Heart right ventricle (tissue), 16 donors: ENCODE measurements at regions of chr17 and their contacts with region 1.

Region 1: DNA sequence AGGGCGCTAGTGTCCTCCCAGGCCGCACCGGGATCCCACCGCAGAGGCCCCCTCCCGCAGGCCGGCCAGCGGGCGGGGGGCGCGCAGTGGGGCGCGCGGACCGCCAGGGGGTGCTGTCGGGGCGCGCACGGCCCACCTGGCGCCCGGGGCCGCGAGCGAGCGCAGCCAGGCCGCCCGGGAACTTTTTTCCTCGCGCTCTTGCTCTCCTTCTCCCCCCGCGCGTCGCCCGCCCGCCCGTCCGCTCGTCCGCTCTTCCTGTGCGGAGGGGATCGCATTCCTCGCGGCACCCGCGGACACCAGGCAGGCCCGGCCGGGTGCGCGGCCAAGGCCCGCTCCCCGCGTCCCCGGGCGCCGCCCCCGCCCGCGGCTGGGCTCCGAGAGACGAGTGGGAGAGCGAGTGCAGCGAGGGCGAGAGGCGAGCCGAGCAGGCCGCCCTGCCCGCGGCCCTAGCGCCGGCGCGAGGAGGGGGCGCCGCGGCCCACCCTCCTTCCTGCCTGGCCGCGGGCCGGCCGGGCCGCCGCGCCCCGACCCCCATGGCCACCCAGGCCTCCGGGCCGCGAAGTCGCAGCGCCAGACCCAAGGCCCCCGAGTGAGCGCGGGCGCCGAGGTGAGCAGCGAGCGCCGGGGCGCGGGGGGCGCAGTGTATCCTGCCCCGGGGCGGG is at the start of gene RAI1:
- DNase-seq: peak; percentile 78 to 81
- ATAC-seq: peak; percentile 36 to 75 (median 68)
- H3K4me3 ChIP-seq: peak within 1 kb of the TSS; percentile 56 to 90 (median 72)
- H3K27ac ChIP-seq: peak within 1 kb of the TSS; percentile 83 to 98 (median 94)
- H3K4me1 ChIP-seq: peaks cover 22 to 47% (median 44%) of the 10 kb centered on the region in 9 donors
- H3K27me3 ChIP-seq: no peaks in the 10 kb centered on the region
- CTCF ChIP-seq: peak; percentile 55 to 99 (median 71)
- total RNA-seq, gene RAI1: 15.8 to 32.0 (median 20.9) TPM

Region 2: GRCh38 chr17:17496189-17497064 is 184.9 kb before region 1 on chr17 and contains the start of gene RASD1:
- intact Hi-C with region 1: no loop called
- DNase-seq: peak; percentile 89 to 94
- ATAC-seq: peak; percentile 88 to 95 (median 92)
- H3K4me3 ChIP-seq: peak within 1 kb of the TSS; percentile 38 to 75 (median 66)
- H3K27ac ChIP-seq: peak within 1 kb of the TSS; percentile 83 to 97 (median 90)
- H3K4me1 ChIP-seq: peaks cover 9 to 54% (median 41%) of the 10 kb centered on the region in 9 donors
- H3K27me3 ChIP-seq: peaks cover 0 to 22% (median 0%) of the 10 kb centered on the region in 7 donors
- CTCF ChIP-seq: peak; percentile 93 to 100 (median 98)
- total RNA-seq, gene RASD1: 2.2 to 67.7 (median 6.8) TPM

Region 3: GRCh38 chr17:17653343-17653742 is 28.0 kb before region 1 on chr17:
- intact Hi-C with region 1: no loop called
- DNase-seq: no peak
- ATAC-seq: peak in 1 of 8 donors; percentile 22
- H3K4me3 ChIP-seq: no peak overlapping the region
- H3K27ac ChIP-seq: no peak overlapping the region
- H3K4me1 ChIP-seq: peaks cover 0 to 6% (median 0%) of the 10 kb centered on the region in 9 donors
- H3K27me3 ChIP-seq: no peaks in the 10 kb centered on the region
- CTCF ChIP-seq: no peak

Region 4: DNA sequence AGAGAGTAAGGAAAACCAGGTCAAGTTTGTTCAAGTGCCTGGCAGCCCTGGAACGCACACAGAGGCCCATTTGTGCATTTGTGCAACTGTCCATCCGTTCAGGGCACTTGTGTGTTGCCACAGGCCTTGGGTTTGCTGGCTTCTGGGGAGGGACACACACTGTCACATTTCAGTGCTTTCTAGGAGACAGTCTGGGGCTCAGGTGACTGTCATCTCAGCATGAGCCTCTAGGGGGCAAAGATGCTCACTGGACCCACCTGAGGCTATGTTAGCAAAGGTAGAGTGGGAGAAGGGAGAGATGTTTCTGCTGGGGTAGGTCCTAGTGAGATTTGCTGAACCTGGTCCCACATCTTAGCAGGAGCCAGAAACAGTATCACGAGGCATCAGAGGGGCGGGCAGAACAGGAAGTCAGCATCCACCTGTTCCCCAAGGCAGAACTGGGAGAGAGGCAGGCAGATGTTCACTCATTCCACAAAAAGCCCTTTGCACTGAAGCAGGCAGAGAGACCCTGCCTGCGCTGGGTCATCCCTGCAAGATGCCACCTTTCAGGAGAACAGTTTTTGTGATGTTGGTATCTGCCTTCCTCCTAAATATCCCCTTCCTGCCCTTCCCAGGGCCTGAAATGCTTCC is 48.4 kb after region 1 on chr17:
- intact Hi-C with region 1: loop called in 1 of 10 experiments (anchors 5 kb)
- DNase-seq: no peak
- ATAC-seq: peak in 3 of 8 donors; percentile 26 to 37 (median 33)
- H3K4me3 ChIP-seq: no peak overlapping the region
- H3K27ac ChIP-seq: peak overlapping the region in 4 of 10 donors; percentile 34 to 52 (median 47)
- H3K4me1 ChIP-seq: peaks cover 20 to 67% (median 38%) of the 10 kb centered on the region in 9 donors
- H3K27me3 ChIP-seq: peaks cover 0 to under 1% (median 0%) of the 10 kb centered on the region in 7 donors
- CTCF ChIP-seq: peak; percentile 20 to 59 (median 50)

Region 5: GRCh38 chr17:17757391-17757791 is 76.1 kb after region 1 on chr17:
- intact Hi-C with region 1: loop called in 2 of 10 experiments (anchors 5 kb)
- DNase-seq: no peak
- ATAC-seq: no peak
- H3K4me3 ChIP-seq: no peak overlapping the region
- H3K27ac ChIP-seq: peak overlapping the region in 5 of 10 donors; percentile 1 to 93 (median 27)
- H3K4me1 ChIP-seq: peaks cover 2 to 97% (median 51%) of the 10 kb centered on the region in 9 donors
- H3K27me3 ChIP-seq: no peaks in the 10 kb centered on the region
- CTCF ChIP-seq: no peak

Region 6: DNA sequence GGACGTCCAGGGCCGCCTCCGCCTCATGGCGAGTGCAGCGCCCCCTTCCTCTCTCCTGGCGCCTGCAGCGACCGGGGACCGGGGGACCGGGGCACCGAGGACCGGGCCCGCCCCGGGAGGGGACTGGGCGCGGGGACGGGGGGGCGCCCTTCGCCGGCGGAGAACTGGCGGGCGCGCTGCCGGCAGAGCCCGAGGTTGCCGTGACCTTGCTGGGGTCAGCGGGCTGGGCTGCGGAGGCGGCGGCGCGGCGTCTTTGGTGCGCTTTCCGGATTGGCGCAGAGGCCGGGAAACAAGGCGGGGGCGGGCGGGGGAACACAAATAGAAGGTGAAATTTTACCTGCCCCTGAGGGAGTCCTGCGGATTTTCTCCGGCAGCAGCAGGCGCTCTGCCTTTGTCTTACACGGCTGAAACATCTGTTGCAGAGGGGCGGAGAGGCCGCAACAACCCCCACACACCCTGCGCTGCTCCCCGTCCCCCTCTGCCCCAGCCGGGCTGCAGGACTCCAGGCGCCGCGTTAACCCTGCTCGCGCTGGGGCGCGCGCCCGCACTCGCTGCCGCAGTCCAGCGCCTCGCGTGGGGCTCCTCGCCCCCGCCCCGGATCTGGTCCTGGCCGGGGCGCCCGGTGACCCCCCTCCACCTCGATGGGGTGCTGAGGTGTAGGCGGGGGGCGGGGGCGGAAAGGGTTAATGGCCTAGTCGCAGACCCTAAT is 102.0 kb after region 1 on chr17:
- intact Hi-C with region 1: loop called in 6 of 10 experiments (anchors 5 to 10 kb)
- DNase-seq: peak; percentile 80 to 86
- ATAC-seq: peak; percentile 25 to 61 (median 46)
- H3K4me3 ChIP-seq: peak overlapping the region; percentile 30 to 68 (median 60)
- H3K27ac ChIP-seq: peak overlapping the region; percentile 68 to 97 (median 91)
- H3K4me1 ChIP-seq: peaks cover 40 to 86% (median 67%) of the 10 kb centered on the region in 9 donors
- H3K27me3 ChIP-seq: peaks cover 0 to 32% (median 0%) of the 10 kb centered on the region in 7 donors
- CTCF ChIP-seq: peak in 6 of 9 donors; percentile 5 to 47 (median 30)

Region 7: GRCh38 chr17:17812211-17813057 is 131.1 kb after region 1 on chr17:
- intact Hi-C with region 1: loop called in 2 of 10 experiments (anchors 5 kb)
- DNase-seq: peak; percentile 77 to 82
- ATAC-seq: peak; percentile 11 to 65 (median 42)
- H3K4me3 ChIP-seq: no peak overlapping the region
- H3K27ac ChIP-seq: peak overlapping the region in 7 of 10 donors; percentile 8 to 56 (median 44)
- H3K4me1 ChIP-seq: peaks cover 14 to 91% (median 52%) of the 10 kb centered on the region in 9 donors
- H3K27me3 ChIP-seq: no peaks in the 10 kb centered on the region
- CTCF ChIP-seq: peak; percentile 99 to 100 (median 100)

Region 8: DNA sequence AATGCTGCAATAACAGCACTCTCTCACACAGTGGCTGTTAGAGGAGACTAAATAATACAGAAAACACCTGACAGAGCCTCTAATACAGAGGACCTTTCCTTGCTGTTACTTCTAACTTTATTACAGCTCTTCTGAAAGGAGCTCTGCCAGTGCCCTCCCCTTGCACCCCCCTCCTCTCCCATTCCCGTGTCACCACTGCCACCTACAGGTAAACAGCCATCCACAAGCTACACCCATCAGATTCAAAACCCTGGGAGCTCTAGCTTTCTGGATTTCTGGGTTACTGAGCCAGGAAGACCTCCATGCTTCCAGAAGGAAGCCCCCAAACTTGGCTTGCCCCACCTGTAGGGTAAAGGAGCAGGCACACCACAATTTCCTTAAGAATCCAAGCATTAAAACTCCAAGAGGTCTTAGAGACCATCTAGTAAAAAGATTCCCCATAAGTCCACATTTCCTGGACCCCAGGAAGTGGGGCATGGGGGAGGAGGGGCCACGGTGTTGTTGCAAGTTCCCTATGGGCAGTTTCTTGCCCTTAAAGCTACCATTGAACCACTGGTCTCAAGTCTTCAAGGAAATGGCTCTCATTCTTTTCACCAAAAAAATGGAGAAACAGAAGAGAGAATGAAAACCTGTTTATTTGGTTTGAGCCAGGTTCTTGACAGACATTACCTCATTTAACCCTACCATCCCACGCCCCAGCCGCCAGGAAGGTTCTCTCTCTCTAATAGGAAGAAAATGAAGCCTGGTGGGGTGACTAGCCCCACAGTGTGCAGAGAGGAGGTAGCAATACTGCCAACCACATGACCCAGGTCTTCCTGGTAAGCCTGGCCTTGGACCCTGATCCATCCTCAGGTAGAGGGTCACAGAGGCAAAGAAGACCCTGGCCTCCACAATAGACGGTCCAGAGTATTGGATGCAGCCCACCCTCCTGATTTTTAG is 238.1 kb after region 1 on chr17:
- intact Hi-C with region 1: loop called in 6 of 10 experiments (anchors 2 to 5 kb)
- DNase-seq: peak; percentile 60 to 82
- ATAC-seq: peak; percentile 50 to 78 (median 67)
- H3K4me3 ChIP-seq: no peak overlapping the region
- H3K27ac ChIP-seq: peak overlapping the region in 5 of 10 donors; percentile 6 to 87 (median 78)
- H3K4me1 ChIP-seq: peaks cover 22 to 62% (median 47%) of the 10 kb centered on the region in 9 donors
- H3K27me3 ChIP-seq: no peaks in the 10 kb centered on the region
- CTCF ChIP-seq: peak; percentile 58 to 85 (median 79)

Region 9: GRCh38 chr17:18038861-18039534 is 357.7 kb after region 1 on chr17 and contains the starts of genes ATPAF2 and GID4:
- intact Hi-C with region 1: loop called in 7 of 10 experiments (anchors 5 to 10 kb)
- DNase-seq: peak; percentile 99 to 100
- ATAC-seq: peak; percentile 96 to 99 (median 98)
- H3K4me3 ChIP-seq: peak within 1 kb of the TSS; percentile 65 to 98 (median 86)
- H3K27ac ChIP-seq: peak within 1 kb of the TSS; percentile 12 to 89 (median 85)
- H3K4me1 ChIP-seq: peaks cover 9 to 60% (median 50%) of the 10 kb centered on the region in 9 donors
- H3K27me3 ChIP-seq: no peaks in the 10 kb centered on the region
- CTCF ChIP-seq: peak in 3 of 9 donors; percentile 10 to 28 (median 22)
- total RNA-seq, gene ATPAF2: 32.6 to 43.5 (median 37.4) TPM
- total RNA-seq, gene GID4: 14.6 to 23.7 (median 17.3) TPM